Sigmoid colon (tissue), 7 donors: ENCODE measurements at regions of chr2 and their contacts with region 1.

Region 1: GRCh38 chr2:221389904-221390303 is 182.2 kb downstream of the EPHA4 start:
- DNase-seq: no peak
- H3K4me3 ChIP-seq: peak overlapping the region in 1 of 4 donors; percentile 1
- H3K27ac ChIP-seq: peak overlapping the region in 3 of 4 donors; percentile 63 to 78 (median 67)
- H3K4me1 ChIP-seq: peaks cover 0 to 35% (median 23%) of the 10 kb centered on the region in 4 donors
- H3K27me3 ChIP-seq: no peaks in the 10 kb centered on the region
- CTCF ChIP-seq: no peak
- EP300 ChIP-seq: peak in 3 of 4 donors; percentile 21 to 87 (median 84)
- POLR2A ChIP-seq: no peak

Region 2: DNA sequence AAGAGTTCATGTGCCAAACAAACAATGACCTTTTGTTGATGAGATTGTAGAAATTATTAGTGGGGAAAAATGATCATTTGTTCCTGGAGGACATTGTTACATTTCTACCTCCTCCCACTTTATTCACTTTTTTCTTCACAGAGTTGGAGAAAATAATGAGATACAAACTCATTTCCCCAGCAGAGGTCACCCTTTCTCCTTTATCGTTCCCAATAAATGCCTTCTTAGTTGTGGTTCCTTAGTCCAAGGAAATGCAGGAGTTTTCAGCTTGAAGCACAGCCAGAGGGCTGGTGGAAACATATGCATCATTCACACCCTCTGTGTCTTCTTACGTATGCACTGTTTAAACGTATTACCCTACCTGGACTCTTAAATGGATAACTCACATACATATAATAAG is 1653.7 kb before region 1 on chr2:
- intact Hi-C with region 1: loop called (anchors 5 kb)
- DNase-seq: no peak
- H3K4me3 ChIP-seq: no peak overlapping the region
- H3K27ac ChIP-seq: no peak overlapping the region
- H3K4me1 ChIP-seq: no peaks in the 10 kb centered on the region
- H3K27me3 ChIP-seq: no peaks in the 10 kb centered on the region
- CTCF ChIP-seq: peak in 3 of 4 experiments; percentile 24 to 54 (median 36)
- EP300 ChIP-seq: no peak
- POLR2A ChIP-seq: no peak

Region 3: GRCh38 chr2:220687231-220687843 is 702.6 kb before region 1 on chr2:
- intact Hi-C with region 1: loop called (anchors 10 kb)
- DNase-seq: peak; percentile 86
- H3K4me3 ChIP-seq: no peak overlapping the region
- H3K27ac ChIP-seq: no peak overlapping the region
- H3K4me1 ChIP-seq: no peaks in the 10 kb centered on the region
- H3K27me3 ChIP-seq: no peaks in the 10 kb centered on the region
- CTCF ChIP-seq: peak; percentile 26 to 87 (median 86)
- EP300 ChIP-seq: no peak
- POLR2A ChIP-seq: no peak

Region 4: GRCh38 chr2:221429741-221430491 is 40.0 kb after region 1 on chr2:
- intact Hi-C with region 1: loop called (anchors 2 kb)
- DNase-seq: peak; percentile 88
- H3K4me3 ChIP-seq: no peak overlapping the region
- H3K27ac ChIP-seq: peak overlapping the region in 3 of 4 donors; percentile 33 to 70 (median 38)
- H3K4me1 ChIP-seq: peaks cover 0 to 11% (median 8%) of the 10 kb centered on the region in 4 donors
- H3K27me3 ChIP-seq: no peaks in the 10 kb centered on the region
- CTCF ChIP-seq: no peak
- EP300 ChIP-seq: no peak
- POLR2A ChIP-seq: no peak